Breast epithelium (tissue), 4 donors: ENCODE measurements at regions of chr7 and their contacts with region 1.

Region 1: DNA sequence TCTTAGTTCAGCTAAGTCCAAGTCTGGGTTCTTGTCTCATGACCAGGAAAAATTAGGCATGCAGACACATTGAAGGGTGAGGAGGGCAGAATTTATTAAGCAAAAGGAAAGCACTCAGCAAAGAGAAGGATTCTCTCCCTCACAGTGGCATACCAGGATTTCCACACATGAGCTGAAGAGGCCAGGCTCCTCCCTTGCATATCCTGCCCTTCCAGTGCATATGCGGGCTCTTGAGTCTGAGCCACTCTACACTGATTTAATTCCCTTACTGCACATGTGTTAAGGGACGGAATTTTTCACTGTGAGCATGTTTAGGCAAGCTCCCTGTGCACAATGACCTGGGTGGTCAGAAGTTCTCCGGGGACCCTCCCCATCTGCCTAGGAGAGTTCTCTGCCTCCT is 652.7 kb upstream of the POM121L12 start:
- DNase-seq: no peak
- H3K4me3 ChIP-seq: no peak overlapping the region
- H3K27ac ChIP-seq: no peak overlapping the region
- H3K4me1 ChIP-seq: no peaks in the 10 kb centered on the region
- H3K27me3 ChIP-seq: no peaks in the 10 kb centered on the region
- CTCF ChIP-seq: no peak
- POLR2A ChIP-seq: no peak

Region 2: DNA sequence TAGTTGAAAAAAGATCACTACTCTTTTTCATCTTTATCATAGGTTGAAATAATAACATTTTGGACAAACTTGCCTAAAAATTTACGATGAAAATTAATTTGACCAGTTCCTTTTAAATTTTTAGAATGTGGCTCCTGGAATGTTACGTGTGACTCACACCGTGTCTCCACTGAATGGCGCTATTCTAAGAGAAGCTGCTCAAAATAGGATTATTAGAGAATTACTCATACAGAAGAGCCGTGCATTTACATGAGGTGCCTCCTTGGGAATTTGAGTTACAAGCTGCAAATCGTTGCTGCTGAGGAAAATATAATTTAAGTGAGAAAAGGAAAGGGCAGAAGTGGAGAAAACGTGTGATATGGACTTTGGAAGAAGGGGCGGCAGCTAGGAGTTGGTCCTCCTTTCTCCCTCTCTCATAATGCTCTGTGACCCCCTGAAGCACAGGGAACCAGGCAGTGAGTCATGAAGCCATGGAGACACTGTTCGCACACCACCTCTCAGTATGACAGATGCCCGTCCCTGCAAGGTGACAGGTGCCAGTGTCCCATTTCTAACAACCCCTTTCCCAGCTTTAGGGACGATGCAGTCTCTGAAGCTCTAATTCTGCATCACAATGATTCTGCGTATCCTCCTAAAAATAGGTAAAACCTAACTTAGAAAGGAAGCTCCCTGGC is 742.9 kb before region 1 on chr7:
- intact Hi-C with region 1: loop called (anchors 5 kb)
- DNase-seq: no peak
- H3K4me3 ChIP-seq: no peak overlapping the region
- H3K27ac ChIP-seq: no peak overlapping the region
- H3K4me1 ChIP-seq: no peaks in the 10 kb centered on the region
- H3K27me3 ChIP-seq: no peaks in the 10 kb centered on the region
- CTCF ChIP-seq: no peak
- POLR2A ChIP-seq: no peak

Region 3: DNA sequence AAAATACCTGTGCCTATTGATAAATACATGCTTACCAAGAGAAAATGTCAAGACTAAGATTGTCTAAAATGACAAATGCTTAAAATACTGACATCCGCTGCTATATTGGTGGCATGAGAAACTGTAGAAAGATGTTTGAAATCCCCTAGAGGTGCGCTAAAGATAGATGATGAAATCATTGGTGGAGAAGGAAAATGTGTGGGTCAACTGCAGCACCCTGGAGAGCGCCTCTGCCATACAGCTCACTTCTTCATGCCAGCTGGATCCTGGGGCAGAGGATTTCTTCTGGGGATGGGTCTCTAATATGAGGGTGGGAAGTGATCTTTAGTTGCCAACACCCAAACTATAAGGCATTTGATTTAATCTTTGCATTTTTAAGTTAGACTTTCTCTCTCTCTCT is 27.7 kb before region 1 on chr7:
- intact Hi-C with region 1: loop called (anchors 2 kb)
- DNase-seq: no peak
- H3K4me3 ChIP-seq: no peak overlapping the region
- H3K27ac ChIP-seq: no peak overlapping the region
- H3K4me1 ChIP-seq: no peaks in the 10 kb centered on the region
- H3K27me3 ChIP-seq: no peaks in the 10 kb centered on the region
- CTCF ChIP-seq: no peak
- POLR2A ChIP-seq: no peak

Region 4: DNA sequence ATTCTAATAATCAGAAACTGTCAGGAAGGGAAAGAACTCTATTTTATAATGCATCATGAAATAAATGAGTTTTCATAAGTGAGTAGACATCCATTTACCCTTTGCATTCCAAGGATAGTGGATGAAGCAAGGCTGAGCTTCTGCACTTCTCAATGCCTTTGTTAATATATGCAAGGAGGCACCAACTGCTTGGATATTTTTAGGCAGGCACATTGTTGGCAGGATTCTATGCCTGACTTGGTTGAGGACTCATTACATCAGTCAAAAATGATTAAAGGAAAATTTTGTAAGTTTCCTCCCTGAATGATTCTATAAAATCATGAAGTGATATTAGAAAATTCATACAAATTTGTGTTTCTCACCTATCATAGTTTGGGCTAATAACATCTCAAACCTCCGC is 40.5 kb after region 1 on chr7:
- intact Hi-C with region 1: no loop called
- DNase-seq: no peak
- H3K4me3 ChIP-seq: no peak overlapping the region
- H3K27ac ChIP-seq: no peak overlapping the region
- H3K4me1 ChIP-seq: no peaks in the 10 kb centered on the region
- H3K27me3 ChIP-seq: no peaks in the 10 kb centered on the region
- CTCF ChIP-seq: no peak
- POLR2A ChIP-seq: no peak